Endothelial cell of umbilical vein (primary cell): ENCODE measurements at regions of chr7 and their contacts with region 1.

Region 1: DNA sequence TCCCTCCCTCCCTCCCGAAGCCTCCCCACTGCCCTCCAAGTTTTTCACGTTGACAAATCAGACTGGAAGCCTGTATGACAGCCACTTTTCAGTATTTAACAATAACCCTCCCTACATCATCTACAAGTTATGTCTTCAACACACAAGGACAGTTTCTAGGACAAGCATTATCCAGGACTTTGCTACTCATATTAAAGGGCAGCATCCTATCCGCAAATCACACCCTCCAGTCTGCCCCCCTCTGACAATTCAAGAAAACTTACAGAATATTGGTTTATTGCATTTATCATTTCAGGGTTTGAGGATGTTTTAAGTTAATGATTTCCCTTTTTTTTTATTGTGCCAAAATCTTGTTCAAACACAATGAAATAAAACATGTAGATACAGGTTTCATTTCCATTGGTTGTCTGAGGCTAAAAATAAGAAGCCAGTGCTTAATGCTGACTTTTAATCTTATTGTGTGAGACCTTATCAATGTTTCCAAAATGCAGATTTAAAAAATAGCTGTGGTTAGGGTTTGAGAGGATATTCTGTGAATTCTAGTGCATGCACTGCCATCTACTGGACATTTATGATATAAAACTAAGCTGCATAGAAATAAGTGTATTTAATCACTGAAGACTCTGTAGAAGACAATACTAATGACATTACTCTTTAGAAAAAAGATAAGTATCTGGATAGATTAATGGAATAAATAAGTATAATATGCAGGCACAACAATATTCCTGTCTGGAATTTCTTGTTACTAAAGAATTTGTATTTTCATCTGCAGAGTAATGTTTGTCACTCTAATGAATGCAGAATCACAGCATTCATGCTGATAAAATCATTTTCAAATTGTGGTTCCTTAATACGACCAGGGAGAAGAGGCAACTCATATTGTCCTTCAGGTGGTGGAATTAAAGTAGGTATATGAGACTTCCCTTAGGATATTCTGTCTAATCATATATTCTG is 64.1 kb downstream of the CAV1 start:
- DNase-seq: peak; percentile 85
- H3K4me3 ChIP-seq: no peak overlapping the region
- H3K27ac ChIP-seq: peak overlapping the region; percentile 42
- H3K4me1 ChIP-seq: peaks cover 38% of the 10 kb centered on the region
- H3K27me3 ChIP-seq: no peaks in the 10 kb centered on the region
- CTCF ChIP-seq: peak; percentile 10 to 27
- POLR2A ChIP-seq: no peak

Region 2: DNA sequence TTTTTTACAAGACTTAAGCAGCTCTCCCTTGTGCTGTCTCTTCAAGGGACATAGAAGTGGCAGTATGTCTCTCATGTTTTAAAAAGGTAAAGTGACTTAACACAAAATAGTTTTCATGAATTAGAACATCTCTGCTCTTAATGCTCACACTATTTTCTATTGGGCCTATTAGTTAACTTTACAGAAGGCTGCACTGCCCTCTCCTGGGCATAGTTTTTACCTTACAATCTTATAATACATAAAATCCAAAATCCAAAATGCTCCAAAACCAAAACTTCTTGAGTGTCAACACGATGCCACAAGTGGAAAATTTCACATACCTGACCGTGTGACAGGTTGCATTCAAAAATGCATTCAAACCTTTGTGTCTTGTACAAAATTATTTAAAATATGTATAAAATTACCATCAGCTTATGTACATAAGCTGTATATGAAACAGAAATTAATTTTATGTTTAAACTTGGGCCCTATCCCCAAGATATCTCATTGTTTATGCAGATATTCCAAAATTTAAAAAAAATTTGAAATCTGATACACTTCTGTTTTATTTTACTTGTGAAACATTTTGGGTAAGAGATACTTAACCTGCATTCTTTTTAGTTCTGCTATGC is 352.8 kb before region 1 on chr7:
- CTCF ChIA-PET with region 1: interaction called, 26 read pairs
- POLR2A ChIA-PET with region 1: interaction called, 3 read pairs
- dilution Hi-C with region 1: no loop called
- intact Hi-C with region 1: no loop called
- DNase-seq: peak; percentile 74
- H3K4me3 ChIP-seq: no peak overlapping the region
- H3K27ac ChIP-seq: no peak overlapping the region
- H3K4me1 ChIP-seq: peaks cover 11% of the 10 kb centered on the region
- H3K27me3 ChIP-seq: no peaks in the 10 kb centered on the region
- CTCF ChIP-seq: peak; percentile 22 to 24
- POLR2A ChIP-seq: no peak

Region 3: DNA sequence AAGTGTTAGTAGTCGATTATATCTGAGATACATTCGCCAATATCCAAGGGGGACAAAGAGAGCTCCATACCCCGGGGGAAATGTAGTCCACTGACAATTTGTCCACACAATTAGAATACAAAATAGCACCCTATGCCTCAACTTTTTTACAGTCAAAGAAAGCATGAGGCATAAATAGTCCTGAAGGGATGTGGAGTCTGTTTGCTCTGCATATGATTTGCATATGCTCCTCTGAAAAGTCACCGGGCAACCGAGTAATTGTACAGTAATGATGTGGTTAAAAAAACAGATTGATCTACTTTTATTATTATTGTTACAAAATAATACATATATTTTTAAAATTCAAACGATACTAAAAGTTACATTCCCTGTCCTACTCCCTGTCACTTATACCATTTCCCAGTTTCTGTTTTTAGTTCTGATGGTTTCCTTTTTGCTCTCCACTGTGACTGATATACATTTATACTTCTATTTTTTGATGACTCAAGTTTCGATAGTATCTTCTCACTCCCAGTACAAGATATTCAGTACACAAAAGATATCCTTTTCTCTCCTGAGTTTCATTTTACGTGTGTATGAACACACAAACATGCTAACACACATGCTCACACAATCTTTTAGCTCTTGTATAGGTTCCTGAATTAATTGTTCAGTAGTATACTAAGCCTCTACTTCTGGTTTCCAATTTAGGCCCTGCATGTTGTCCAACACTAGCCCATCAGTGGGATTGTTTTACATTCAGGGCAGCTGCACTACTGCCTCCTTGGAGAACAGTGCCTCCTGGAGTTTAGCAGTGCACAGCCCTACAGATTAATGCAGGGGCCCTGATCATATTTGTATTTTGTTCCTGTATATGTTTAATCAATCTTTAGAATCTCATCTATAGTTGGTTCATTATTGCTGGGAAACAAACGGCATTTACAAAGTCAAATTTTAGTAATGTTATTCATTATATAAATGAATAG is 247.7 kb before region 1 on chr7:
- CTCF ChIA-PET with region 1: interaction called, 15 read pairs
- POLR2A ChIA-PET with region 1: no interaction called
- dilution Hi-C with region 1: no loop called
- intact Hi-C with region 1: loop called (anchors 1 kb)
- DNase-seq: peak; percentile 72
- H3K4me3 ChIP-seq: peak overlapping the region in 1 of 3 experiments; percentile 31
- H3K27ac ChIP-seq: peak overlapping the region; percentile 87
- H3K4me1 ChIP-seq: peaks cover 49% of the 10 kb centered on the region
- H3K27me3 ChIP-seq: no peaks in the 10 kb centered on the region
- CTCF ChIP-seq: peak; percentile 45 to 48
- POLR2A ChIP-seq: no peak

Region 4: DNA sequence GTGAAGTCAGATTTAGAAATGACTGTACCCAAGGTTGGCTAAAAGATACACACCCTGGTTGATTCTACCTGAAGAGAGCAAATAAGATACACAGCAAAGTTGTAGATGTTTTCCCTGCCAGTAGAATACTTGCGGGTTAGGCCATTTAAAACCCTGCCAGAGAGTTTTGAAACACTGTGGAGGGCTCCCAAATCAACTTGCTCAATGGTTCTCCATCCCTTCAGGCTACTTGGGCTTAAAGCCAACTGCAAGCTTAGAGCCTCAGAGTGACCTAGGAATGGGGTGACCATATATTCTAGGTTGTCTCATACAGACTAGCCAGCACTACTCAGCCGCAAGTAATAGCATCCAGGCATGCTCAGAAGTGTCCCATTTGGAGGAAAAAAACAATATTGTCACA is 54.1 kb before region 1 on chr7:
- CTCF ChIA-PET with region 1: interaction called, 19 read pairs
- POLR2A ChIA-PET with region 1: no interaction called
- dilution Hi-C with region 1: no loop called
- intact Hi-C with region 1: no loop called
- DNase-seq: no peak
- H3K4me3 ChIP-seq: no peak overlapping the region
- H3K27ac ChIP-seq: peak overlapping the region; percentile 46
- H3K4me1 ChIP-seq: peaks cover 42% of the 10 kb centered on the region
- H3K27me3 ChIP-seq: no peaks in the 10 kb centered on the region
- CTCF ChIP-seq: no peak
- POLR2A ChIP-seq: no peak

Region 5: GRCh38 chr7:116610210-116610609 is 21.3 kb after region 1 on chr7:
- CTCF ChIA-PET with region 1: interaction called, 15 read pairs
- POLR2A ChIA-PET with region 1: interaction called, 3 read pairs
- dilution Hi-C with region 1: no loop called
- intact Hi-C with region 1: loop called (anchors 1 kb)
- DNase-seq: peak; percentile 82
- H3K4me3 ChIP-seq: no peak overlapping the region
- H3K27ac ChIP-seq: no peak overlapping the region
- H3K4me1 ChIP-seq: peaks cover 23% of the 10 kb centered on the region
- H3K27me3 ChIP-seq: no peaks in the 10 kb centered on the region
- CTCF ChIP-seq: no peak
- POLR2A ChIP-seq: peak; percentile 20

Region 6: DNA sequence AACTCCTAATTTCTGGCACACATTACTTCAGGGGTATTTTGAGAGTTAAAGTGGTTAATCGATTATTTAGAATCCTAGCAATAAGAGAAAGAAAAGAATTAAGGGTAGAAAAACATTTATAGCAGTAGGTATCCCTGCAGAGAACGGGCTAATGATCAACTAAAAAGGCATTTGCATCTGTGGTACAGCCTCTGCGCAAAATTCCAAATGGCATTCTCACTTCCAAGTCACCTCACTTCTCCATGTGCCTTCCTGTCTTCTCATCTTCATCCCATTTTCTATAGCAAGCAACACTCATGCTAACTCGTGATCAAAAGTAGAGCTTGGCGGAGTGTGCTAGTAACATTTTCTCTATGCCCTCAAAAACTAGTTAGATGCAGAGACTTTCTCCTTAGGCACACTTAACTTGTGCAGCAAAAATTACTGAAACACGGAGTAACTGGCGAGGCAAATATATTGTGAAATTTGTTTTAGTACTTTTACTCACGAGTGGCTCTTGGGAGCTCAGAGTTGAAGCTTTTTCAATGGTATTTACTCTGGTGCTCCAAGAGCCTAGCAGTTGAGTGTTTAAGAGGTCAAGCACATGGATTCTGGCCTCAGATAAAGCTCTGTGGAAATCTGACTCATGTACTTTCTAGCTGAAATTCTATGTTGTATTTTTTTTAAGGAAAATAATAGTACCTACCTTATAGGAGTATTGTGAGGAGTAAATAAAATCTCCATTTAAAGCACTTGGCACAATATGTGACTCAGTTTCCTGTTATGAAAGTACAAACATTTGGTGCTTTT is 148.2 kb after region 1 on chr7:
- CTCF ChIA-PET with region 1: interaction called, 16 read pairs
- POLR2A ChIA-PET with region 1: no interaction called
- dilution Hi-C with region 1: no loop called
- intact Hi-C with region 1: loop called (anchors 2 kb)
- DNase-seq: peak; percentile 90
- H3K4me3 ChIP-seq: peak overlapping the region in 1 of 3 experiments; percentile 19
- H3K27ac ChIP-seq: peak overlapping the region; percentile 58
- H3K4me1 ChIP-seq: peaks cover 40% of the 10 kb centered on the region
- H3K27me3 ChIP-seq: no peaks in the 10 kb centered on the region
- CTCF ChIP-seq: no peak
- POLR2A ChIP-seq: no peak

Region 7: DNA sequence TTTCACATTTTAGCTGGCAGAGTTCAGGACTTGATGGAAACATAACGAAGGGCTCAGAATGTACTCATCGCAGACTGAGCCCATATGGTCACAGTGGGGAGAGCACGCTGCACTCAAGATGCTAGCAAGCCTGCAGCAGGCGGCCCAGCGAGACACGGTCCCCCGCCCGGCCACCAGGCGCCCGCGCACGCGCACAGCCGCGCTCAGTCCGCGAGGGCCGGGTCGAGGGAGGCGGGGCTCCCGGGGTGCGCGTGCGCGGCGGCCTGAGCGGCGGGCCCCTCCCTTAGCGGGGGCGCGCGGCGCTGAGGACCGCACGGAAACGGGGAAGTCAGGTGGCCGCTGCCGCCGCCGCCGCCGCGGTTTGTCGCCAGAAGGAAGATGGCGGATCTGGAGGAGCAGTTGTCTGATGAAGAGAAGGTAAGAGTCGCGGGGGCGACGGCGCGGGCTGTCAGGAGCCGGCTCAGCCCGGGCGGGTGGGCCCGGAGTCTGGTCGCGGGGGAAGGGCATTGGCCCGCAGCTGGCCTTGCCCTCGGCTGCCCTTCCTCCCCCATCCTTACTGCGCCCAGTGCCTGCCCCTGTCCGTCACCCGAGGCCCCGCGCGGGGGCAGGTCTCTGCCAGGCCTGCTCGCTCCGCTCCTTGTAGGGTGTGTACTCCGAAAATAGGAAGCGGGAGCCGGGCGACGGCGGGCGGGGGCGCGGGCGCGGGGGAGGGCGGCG is 273.5 kb after region 1 on chr7 and contains the start of gene CAPZA2:
- CTCF ChIA-PET with region 1: no interaction called
- POLR2A ChIA-PET with region 1: no interaction called
- dilution Hi-C with region 1: no loop called
- intact Hi-C with region 1: loop called (anchors 2 kb)
- DNase-seq: peak; percentile 93
- H3K4me3 ChIP-seq: peak within 1 kb of the TSS; percentile 55 to 95 (median 92)
- H3K27ac ChIP-seq: peak within 1 kb of the TSS; percentile 65
- H3K4me1 ChIP-seq: peaks cover 19% of the 10 kb centered on the region
- H3K27me3 ChIP-seq: no peaks in the 10 kb centered on the region
- CTCF ChIP-seq: peak in 1 of 2 donors; percentile 34
- POLR2A ChIP-seq: peak; percentile 80
- total RNA-seq, gene CAPZA2: 343 and 347 TPM in 2 replicates

Region 8: DNA sequence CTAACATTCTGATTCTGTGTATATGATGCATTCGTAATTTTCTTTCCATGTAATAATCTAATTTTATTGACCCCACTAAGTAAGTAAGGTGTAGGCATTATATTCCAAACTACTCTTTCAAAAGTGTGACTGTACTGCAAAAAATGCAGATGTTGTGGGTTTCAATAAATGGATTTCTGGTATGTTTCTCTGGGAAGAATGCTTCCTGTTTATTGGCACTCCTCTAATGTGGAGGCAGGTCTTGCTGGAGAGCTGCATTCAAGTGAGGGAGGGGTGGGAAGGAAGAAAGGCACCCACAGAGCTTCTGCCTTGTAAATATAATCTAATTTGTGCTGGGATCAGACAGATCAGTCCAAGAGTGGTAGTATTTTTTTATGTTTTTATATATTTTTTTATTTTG is 388.3 kb after region 1 on chr7:
- CTCF ChIA-PET with region 1: no interaction called
- POLR2A ChIA-PET with region 1: no interaction called
- dilution Hi-C with region 1: no loop called
- intact Hi-C with region 1: no loop called
- DNase-seq: no peak
- H3K4me3 ChIP-seq: no peak overlapping the region
- H3K27ac ChIP-seq: no peak overlapping the region
- H3K4me1 ChIP-seq: peaks cover 6% of the 10 kb centered on the region
- H3K27me3 ChIP-seq: no peaks in the 10 kb centered on the region
- CTCF ChIP-seq: no peak
- POLR2A ChIP-seq: no peak

Region 9: DNA sequence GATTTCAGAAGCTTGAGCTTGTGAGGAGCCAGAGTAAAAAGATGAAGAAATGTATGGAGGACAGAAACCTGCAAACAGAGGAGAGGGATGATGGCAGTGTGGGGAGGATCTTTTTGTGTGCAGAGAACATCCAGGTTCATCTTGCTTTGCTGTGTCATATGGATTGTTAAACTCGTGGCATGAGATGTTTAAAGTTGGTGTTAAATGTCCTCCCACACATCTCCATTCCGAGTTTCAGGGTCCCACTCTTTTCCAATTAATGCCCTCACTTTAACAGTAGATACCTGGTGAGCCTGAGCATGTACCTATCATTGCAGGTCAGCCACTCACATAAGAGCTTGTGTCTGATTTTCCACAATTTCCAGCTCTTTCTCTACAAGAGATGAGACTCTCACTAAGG is 512.1 kb after region 1 on chr7:
- CTCF ChIA-PET with region 1: no interaction called
- POLR2A ChIA-PET with region 1: no interaction called
- dilution Hi-C with region 1: no loop called
- intact Hi-C with region 1: no loop called
- DNase-seq: no peak
- H3K4me3 ChIP-seq: no peak overlapping the region
- H3K27ac ChIP-seq: no peak overlapping the region
- H3K4me1 ChIP-seq: peaks cover 4% of the 10 kb centered on the region
- H3K27me3 ChIP-seq: no peaks in the 10 kb centered on the region
- CTCF ChIP-seq: no peak
- POLR2A ChIP-seq: no peak